Prostate gland (tissue), 2 donors: ENCODE measurements at regions of chr10 and their contacts with region 1.

Region 1: GRCh38 chr10:86399879-86400704 is 33.5 kb upstream of the GRID1 start:
- DNase-seq: peak; percentile 93
- H3K4me3 ChIP-seq: peak overlapping the region; percentile 44 to 59
- H3K27ac ChIP-seq: peak overlapping the region; percentile 74 to 82
- H3K4me1 ChIP-seq: no peaks in the 10 kb centered on the region
- H3K27me3 ChIP-seq: no peaks in the 10 kb centered on the region
- CTCF ChIP-seq: peak; percentile 87 to 95 (median 91)
- POLR2A ChIP-seq: no peak

Region 2: GRCh38 chr10:86244297-86245014 is 155.6 kb before region 1 on chr10:
- intact Hi-C with region 1: no loop called
- DNase-seq: no peak
- H3K4me3 ChIP-seq: no peak overlapping the region
- H3K27ac ChIP-seq: no peak overlapping the region
- H3K4me1 ChIP-seq: no peaks in the 10 kb centered on the region
- H3K27me3 ChIP-seq: no peaks in the 10 kb centered on the region
- CTCF ChIP-seq: no peak
- POLR2A ChIP-seq: no peak

Region 3: GRCh38 chr10:86521678-86522509 is 121.8 kb after region 1 on chr10 and contains the start of gene WAPL:
- intact Hi-C with region 1: loop called (anchors 5 kb)
- DNase-seq: peak; percentile 95
- H3K4me3 ChIP-seq: peak within 1 kb of the TSS; percentile 95 to 99
- H3K27ac ChIP-seq: peak within 1 kb of the TSS; percentile 90 to 95
- H3K4me1 ChIP-seq: no peaks in the 10 kb centered on the region
- H3K27me3 ChIP-seq: no peaks in the 10 kb centered on the region
- CTCF ChIP-seq: peak in 1 of 4 experiments; percentile 13
- POLR2A ChIP-seq: peak; percentile 77
- total RNA-seq, gene WAPL: 29.6 to 46.8 TPM

Region 4: GRCh38 chr10:86585037-86585725 is 185.1 kb after region 1 on chr10:
- intact Hi-C with region 1: loop called (anchors 1 kb)
- DNase-seq: peak; percentile 40
- H3K4me3 ChIP-seq: no peak overlapping the region
- H3K27ac ChIP-seq: no peak overlapping the region
- H3K4me1 ChIP-seq: no peaks in the 10 kb centered on the region
- H3K27me3 ChIP-seq: no peaks in the 10 kb centered on the region
- CTCF ChIP-seq: peak; percentile 82 to 93 (median 90)
- POLR2A ChIP-seq: no peak